HAP-1 (cell line): ENCODE measurements at regions of chr21 and their contacts with region 1.

Region 1: DNA sequence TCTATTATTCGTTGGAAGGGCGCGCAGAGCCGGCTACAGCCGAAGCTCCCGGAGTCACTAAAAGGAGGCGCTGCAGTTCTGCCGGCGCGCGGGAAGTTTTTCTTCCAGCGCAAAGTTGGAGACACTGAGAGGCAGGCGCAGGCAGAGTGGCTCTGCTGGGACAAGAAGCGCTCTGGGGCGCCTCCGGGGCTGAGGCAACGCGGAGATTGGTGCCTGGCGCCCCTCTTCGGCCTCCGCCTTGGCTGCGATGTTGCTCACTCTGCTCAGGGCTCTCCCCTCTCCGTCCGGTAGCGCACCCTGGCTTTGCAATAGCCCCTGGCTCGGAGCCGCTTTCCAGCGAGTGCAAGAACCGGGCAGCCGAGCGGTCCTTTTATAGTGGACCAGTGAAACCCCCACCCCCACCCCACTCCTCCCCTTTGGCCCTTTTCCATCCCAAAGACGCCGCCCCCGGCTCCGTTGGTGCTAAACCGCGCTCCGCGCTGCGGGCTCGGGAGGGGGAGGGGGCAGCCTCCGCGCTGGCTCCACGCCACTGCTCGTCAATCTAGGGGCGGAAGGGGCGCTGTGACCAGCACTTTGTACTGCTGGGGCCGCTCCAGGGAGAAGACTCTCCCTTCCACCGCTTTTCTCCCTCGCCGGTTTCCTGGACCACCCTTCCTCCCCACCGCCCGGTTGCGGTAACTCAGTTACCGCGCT is at the start of gene ADAMTS1:
- DNase-seq: peak; percentile 71 to 91
- H3K4me3 ChIP-seq: peak within 1 kb of the TSS; percentile 51
- H3K4me1 ChIP-seq: peaks cover 11% of the 10 kb centered on the region
- H3K27me3 ChIP-seq: peaks cover 23% of the 10 kb centered on the region

Region 2: DNA sequence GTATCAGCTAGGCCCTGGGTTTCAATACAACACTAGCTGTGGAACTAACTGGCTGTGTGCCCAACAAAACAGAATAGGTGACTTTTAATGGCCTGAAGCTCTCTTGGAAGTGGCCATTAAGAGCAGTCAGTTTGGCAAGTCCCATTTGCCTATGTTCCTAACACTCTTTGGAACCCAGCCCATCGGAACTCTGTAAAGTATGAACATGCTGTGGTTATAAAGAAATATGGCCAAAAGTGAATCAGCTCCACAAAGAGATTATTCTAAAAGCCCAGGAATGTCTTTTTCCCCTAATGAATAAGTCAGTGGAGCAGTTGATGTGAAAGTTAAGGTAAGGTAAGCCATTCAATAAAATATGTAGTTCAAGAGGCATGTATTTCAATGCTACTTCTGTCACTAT is 345.4 kb after region 1 on chr21:
- in situ Hi-C with region 1: loop called (anchors 25 kb)
- DNase-seq: no peak
- H3K4me3 ChIP-seq: no peak overlapping the region
- H3K4me1 ChIP-seq: no peaks in the 10 kb centered on the region
- H3K27me3 ChIP-seq: no peaks in the 10 kb centered on the region

Region 3: GRCh38 chr21:27564684-27565301 is 719.6 kb after region 1 on chr21:
- in situ Hi-C with region 1: loop called (anchors 25 kb)
- DNase-seq: peak; percentile 29 to 33
- H3K4me3 ChIP-seq: no peak overlapping the region
- H3K4me1 ChIP-seq: no peaks in the 10 kb centered on the region
- H3K27me3 ChIP-seq: no peaks in the 10 kb centered on the region

Region 4: GRCh38 chr21:27700974-27701614 is 855.9 kb after region 1 on chr21:
- in situ Hi-C with region 1: loop called (anchors 5 kb)
- DNase-seq: peak; percentile 61 to 82
- H3K4me3 ChIP-seq: no peak overlapping the region
- H3K4me1 ChIP-seq: no peaks in the 10 kb centered on the region
- H3K27me3 ChIP-seq: no peaks in the 10 kb centered on the region

Region 5: GRCh38 chr21:28745131-28746016 is 1900.2 kb after region 1 on chr21:
- in situ Hi-C with region 1: loop called (anchors 5 kb)
- DNase-seq: peak; percentile 76 to 84
- H3K4me3 ChIP-seq: no peak overlapping the region
- H3K4me1 ChIP-seq: 0 out of 2 replicates have a peak, but pooled peaks cover 2% of the 10 kb centered on the region
- H3K27me3 ChIP-seq: no peaks in the 10 kb centered on the region